ENCODE measurements at regions of chr13 and their contacts with region 1.

Region 1: GRCh38 chr13:35157143-35157755 is 215.2 kb downstream of the NBEA start:
- DNase-seq: no peak
- ATAC-seq: peak; percentile 50 to 52

Region 2: GRCh38 chr13:33931397-33932311 is 1225.6 kb before region 1 on chr13:
- intact Hi-C with region 1: loop called (anchors 2 to 10 kb)
- DNase-seq: no peak
- ATAC-seq: peak; percentile 74 to 81

Region 3: GRCh38 chr13:34847759-34848158 is 309.5 kb before region 1 on chr13:
- intact Hi-C with region 1: no loop called
- DNase-seq: no peak
- ATAC-seq: no peak

Region 4: GRCh38 chr13:35219021-35219420 is 61.8 kb after region 1 on chr13:
- intact Hi-C with region 1: no loop called
- DNase-seq: no peak
- ATAC-seq: no peak

Measured in left cardiac atrium (tissue), 4 donors.